ENCODE measurements at regions of chr17 and their contacts with region 1.

Region 1: GRCh38 chr17:68238164-68238872 is 9.5 kb upstream of the AMZ2 start:
- DNase-seq: peak; percentile 85
- H3K4me3 Mint-ChIP-seq: peak overlapping the region; percentile 82
- H3K27ac Mint-ChIP-seq: peak overlapping the region; percentile 98
- H3K4me1 Mint-ChIP-seq: peaks cover 52% of the 10 kb centered on the region
- H3K27me3 Mint-ChIP-seq: no peaks in the 10 kb centered on the region

Region 2: GRCh38 chr17:68179926-68180285 is 58.4 kb before region 1 on chr17:
- intact Hi-C with region 1: loop called (anchors 2 kb)
- DNase-seq: no peak
- H3K4me3 Mint-ChIP-seq: no peak overlapping the region
- H3K27ac Mint-ChIP-seq: no peak overlapping the region
- H3K4me1 Mint-ChIP-seq: peaks cover 35% of the 10 kb centered on the region
- H3K27me3 Mint-ChIP-seq: no peaks in the 10 kb centered on the region

Region 3: GRCh38 chr17:68697850-68698361 is 459.6 kb after region 1 on chr17:
- intact Hi-C with region 1: no loop called
- DNase-seq: no peak
- H3K4me3 Mint-ChIP-seq: no peak overlapping the region
- H3K27ac Mint-ChIP-seq: no peak overlapping the region
- H3K4me1 Mint-ChIP-seq: no peaks in the 10 kb centered on the region
- H3K27me3 Mint-ChIP-seq: peaks cover 4% of the 10 kb centered on the region

Measured in activated CD4-positive, alpha-beta T cell treated with anti-CD3 and anti-CD28 coated beads, Interleukin-2, amount 10 ng/mL, durations not matched to agents 24 days and 14 days (primary cell).